IMR-90 (cell line): ENCODE measurements at regions of chr12 and their contacts with region 1.

Region 1: DNA sequence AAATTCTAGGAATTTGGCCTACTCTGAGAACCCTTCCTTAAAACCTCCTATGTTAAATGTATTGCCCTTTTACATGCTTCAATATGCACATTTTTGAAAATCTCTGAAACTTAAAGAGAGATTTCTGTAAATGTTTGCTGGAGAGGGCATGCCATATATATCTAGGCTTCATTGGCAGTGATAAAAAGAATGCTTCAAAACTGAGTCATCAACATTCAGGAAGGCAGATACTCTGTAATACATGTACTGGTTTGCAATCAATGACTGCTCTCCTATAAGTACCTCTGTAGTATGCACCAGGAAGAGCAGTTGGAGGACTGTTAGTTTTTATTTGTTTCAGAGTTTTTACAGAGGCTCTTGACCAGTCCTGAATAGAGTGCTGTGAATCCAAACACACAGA is 739.9 kb downstream of the SLC16A7 start:
- DNase-seq: peak; percentile 67
- ATAC-seq: peak; percentile 94
- H3K4me3 ChIP-seq: no peak overlapping the region
- H3K27ac ChIP-seq: no peak overlapping the region
- H3K4me1 ChIP-seq: no peaks in the 10 kb centered on the region
- H3K27me3 ChIP-seq: no peaks in the 10 kb centered on the region
- CTCF ChIP-seq: no peak
- POLR2A ChIP-seq: no peak
- RAD21 ChIP-seq: no peak

Region 2: DNA sequence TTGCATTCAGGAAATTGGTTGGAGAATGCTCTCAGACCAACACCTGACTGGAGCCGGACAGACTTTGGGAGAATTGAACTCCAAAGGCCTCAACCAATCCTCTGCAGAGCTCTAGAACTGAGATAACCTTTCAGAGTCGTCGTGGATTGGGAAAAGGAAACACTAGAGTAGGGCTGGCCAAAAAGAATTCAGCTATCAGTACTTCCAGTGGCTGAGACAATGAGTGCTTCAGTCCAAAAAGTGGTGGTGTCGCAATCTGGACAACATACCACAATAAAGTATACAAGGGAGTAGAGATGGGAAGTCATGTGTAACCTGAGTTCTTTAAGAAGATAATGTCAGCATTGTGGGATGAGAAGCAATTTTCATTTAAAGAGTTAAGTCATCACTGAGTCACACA is 362.8 kb before region 1 on chr12:
- CTCF ChIA-PET with region 1: no interaction called
- POLR2A ChIA-PET with region 1: no interaction called
- dilution Hi-C with region 1: no loop called
- in situ Hi-C with region 1: no loop called
- intact Hi-C with region 1: no loop called
- DNase-seq: peak; percentile 88
- ATAC-seq: peak; percentile 86
- H3K4me3 ChIP-seq: no peak overlapping the region
- H3K27ac ChIP-seq: peak overlapping the region; percentile 41
- H3K4me1 ChIP-seq: peaks cover 5% of the 10 kb centered on the region
- H3K27me3 ChIP-seq: no peaks in the 10 kb centered on the region
- CTCF ChIP-seq: no peak
- POLR2A ChIP-seq: no peak
- RAD21 ChIP-seq: no peak

Region 3: DNA sequence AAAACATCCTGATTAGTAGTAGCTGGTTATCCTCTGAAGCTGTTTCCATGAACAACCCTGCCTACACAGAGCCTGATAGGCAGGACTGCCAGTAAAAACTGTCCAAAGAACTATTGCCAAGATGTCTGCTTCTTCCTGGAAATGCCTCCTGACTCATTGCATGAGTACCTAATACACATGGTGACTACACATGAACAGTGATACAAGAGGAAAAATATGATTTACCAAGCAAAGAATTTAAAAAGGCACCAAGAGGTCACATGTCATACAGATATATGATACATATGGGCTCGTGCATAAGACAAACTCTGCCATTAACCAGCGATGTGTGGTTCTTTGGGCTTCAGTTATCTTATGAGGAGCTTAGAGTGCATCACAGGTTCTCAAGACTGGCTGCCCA is 187.6 kb before region 1 on chr12:
- CTCF ChIA-PET with region 1: no interaction called
- POLR2A ChIA-PET with region 1: no interaction called
- dilution Hi-C with region 1: no loop called
- in situ Hi-C with region 1: no loop called
- intact Hi-C with region 1: loop called (anchors 5 kb)
- DNase-seq: peak; percentile 92
- ATAC-seq: peak; percentile 78
- H3K4me3 ChIP-seq: no peak overlapping the region
- H3K27ac ChIP-seq: peak overlapping the region; percentile 76
- H3K4me1 ChIP-seq: peaks cover 2% of the 10 kb centered on the region
- H3K27me3 ChIP-seq: no peaks in the 10 kb centered on the region
- CTCF ChIP-seq: no peak
- POLR2A ChIP-seq: no peak
- RAD21 ChIP-seq: no peak

Region 4: DNA sequence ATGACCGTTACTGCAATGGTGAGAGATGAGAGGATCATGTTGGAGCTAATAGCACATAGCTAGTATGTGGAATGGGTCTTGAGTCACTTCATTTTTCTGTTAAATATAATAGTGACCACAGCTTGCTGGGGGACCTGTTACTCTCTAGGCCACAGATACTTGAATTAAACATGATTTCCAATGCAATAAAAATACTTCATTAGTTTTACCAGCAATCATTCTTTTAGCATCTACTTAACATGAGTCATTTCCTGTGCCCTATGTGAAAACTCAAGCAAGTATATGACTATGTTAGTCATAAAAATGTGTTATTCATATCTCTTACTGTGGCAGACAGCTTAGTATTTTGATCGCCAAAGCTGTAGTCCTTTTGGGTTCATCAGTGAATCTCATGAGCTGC is 58.9 kb after region 1 on chr12:
- CTCF ChIA-PET with region 1: no interaction called
- POLR2A ChIA-PET with region 1: no interaction called
- dilution Hi-C with region 1: no loop called
- in situ Hi-C with region 1: no loop called
- intact Hi-C with region 1: loop called (anchors 5 kb)
- DNase-seq: peak; percentile 85
- ATAC-seq: peak; percentile 87
- H3K4me3 ChIP-seq: no peak overlapping the region
- H3K27ac ChIP-seq: no peak overlapping the region
- H3K4me1 ChIP-seq: no peaks in the 10 kb centered on the region
- H3K27me3 ChIP-seq: no peaks in the 10 kb centered on the region
- CTCF ChIP-seq: no peak
- POLR2A ChIP-seq: no peak
- RAD21 ChIP-seq: no peak